HEK293T (cell line): ENCODE measurements at regions of chr2 and their contacts with region 1.

Region 1: GRCh38 chr2:191165176-191165643 is 14.4 kb upstream of the STAT4 start:
- DNase-seq: peak; percentile 45

Region 2: GRCh38 chr2:191202209-191202721 is 37.1 kb after region 1 on chr2:
- CTCF ChIA-PET with region 1: no interaction called
- POLR2A ChIA-PET with region 1: no interaction called
- DNase-seq: no peak

Region 3: DNA sequence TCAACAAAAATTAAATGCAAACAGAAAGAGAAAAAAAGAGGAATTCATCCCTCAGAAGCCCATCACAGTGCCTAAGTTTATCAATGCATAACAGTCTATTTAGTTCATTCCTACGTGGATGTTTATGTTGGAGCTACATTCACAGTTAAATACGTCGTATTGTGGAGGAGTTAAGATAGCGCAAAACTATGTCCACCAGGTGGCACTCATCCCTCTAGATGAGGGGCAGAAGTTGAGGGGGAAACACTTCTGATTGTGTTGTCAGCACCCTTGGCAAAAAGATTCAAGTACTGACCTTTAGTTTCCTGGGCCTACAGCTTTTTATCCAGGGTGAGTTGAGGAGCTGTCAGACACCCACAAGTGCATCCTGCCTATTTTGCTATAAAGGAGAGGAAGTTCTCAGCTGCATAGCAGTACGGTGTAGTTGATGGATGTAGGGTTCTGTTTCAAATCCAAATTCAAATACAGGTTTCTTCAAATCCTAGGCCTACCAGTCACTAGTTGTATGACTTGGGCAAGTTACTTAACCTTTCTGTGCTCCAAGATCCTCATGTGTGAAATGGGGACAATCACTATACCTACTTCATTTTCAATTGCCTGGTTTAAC is 53.2 kb after region 1 on chr2:
- CTCF ChIA-PET with region 1: interaction called, 17 read pairs
- POLR2A ChIA-PET with region 1: no interaction called
- DNase-seq: peak; percentile 61